Heart right ventricle (tissue), 16 donors: ENCODE measurements at regions of chr10 and their contacts with region 1.

Region 1: GRCh38 chr10:83140811-83141210 is 998.5 kb upstream of the GHITM start:
- DNase-seq: no peak
- ATAC-seq: no peak
- H3K4me3 ChIP-seq: no peak overlapping the region
- H3K27ac ChIP-seq: no peak overlapping the region
- H3K4me1 ChIP-seq: no peaks in the 10 kb centered on the region
- H3K27me3 ChIP-seq: no peaks in the 10 kb centered on the region
- CTCF ChIP-seq: no peak

Region 2: DNA sequence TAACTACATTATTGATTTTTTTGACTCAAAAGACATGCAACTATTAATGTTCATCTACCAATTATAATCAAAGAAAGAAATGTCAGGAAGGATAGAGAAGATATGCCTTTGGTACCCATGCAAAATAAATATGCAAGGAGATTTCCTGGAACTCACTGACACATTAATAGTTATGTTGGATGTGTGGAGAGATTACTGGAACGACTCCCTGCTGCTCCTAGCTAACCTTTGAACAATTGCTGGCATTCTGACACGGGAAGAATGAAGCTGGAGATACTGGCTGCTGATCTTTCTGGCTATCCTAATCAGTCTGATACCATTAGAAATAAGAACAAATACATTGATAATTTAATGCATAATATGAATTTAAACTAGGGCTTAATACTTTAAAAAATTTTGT is 1773.7 kb before region 1 on chr10:
- intact Hi-C with region 1: no loop called
- DNase-seq: no peak
- ATAC-seq: no peak
- H3K4me3 ChIP-seq: no peak overlapping the region
- H3K27ac ChIP-seq: no peak overlapping the region
- H3K4me1 ChIP-seq: no peaks in the 10 kb centered on the region
- H3K27me3 ChIP-seq: no peaks in the 10 kb centered on the region
- CTCF ChIP-seq: no peak

Region 3: DNA sequence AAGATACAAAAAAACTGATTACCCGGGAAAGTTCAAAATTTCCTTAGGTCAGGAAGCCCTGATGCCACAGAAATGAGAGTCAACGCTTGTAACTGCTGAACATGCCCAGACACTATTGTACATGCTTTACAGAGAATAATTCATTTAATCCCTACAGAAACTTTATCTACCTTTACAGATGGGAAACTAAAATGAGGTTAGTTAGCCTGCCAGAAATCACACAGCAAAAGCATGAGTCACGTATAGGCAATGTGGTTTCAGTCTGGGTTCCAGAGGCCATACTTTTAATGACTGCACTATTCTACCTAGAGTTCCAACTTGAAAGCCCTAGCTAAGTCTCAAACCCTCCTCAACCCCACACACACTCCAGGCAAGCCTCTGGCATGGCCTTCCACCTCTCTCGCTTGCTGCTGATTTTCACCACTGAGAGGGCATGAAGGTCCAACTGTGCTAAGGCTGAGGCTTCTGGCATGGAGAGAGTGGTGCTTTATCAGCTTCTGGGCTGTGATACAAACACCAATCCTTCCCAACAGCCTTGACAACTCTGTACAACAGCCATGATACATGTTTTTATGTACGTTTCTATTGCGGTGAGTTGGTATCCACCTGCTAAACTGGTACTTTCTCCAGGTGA is 12.8 kb before region 1 on chr10:
- intact Hi-C with region 1: loop called in 1 of 10 experiments (anchors 2 kb)
- DNase-seq: no peak
- ATAC-seq: no peak
- H3K4me3 ChIP-seq: no peak overlapping the region
- H3K27ac ChIP-seq: no peak overlapping the region
- H3K4me1 ChIP-seq: no peaks in the 10 kb centered on the region
- H3K27me3 ChIP-seq: no peaks in the 10 kb centered on the region
- CTCF ChIP-seq: no peak